CD4-positive, alpha-beta memory T cell (primary cell): ENCODE measurements at regions of chr15 and their contacts with region 1.

Region 1: GRCh38 chr15:51503003-51503402 is 119.6 kb downstream of the DMXL2 start:
- DNase-seq: no peak
- H3K4me3 ChIP-seq: no peak overlapping the region
- H3K4me3 Mint-ChIP-seq: no peak overlapping the region
- H3K27ac ChIP-seq: no peak overlapping the region
- H3K27ac Mint-ChIP-seq: no peak overlapping the region
- H3K4me1 ChIP-seq: no peaks in the 10 kb centered on the region
- H3K4me1 Mint-ChIP-seq: no peaks in the 10 kb centered on the region
- H3K27me3 ChIP-seq: no peaks in the 10 kb centered on the region
- H3K27me3 Mint-ChIP-seq: no peaks in the 10 kb centered on the region

Region 2: DNA sequence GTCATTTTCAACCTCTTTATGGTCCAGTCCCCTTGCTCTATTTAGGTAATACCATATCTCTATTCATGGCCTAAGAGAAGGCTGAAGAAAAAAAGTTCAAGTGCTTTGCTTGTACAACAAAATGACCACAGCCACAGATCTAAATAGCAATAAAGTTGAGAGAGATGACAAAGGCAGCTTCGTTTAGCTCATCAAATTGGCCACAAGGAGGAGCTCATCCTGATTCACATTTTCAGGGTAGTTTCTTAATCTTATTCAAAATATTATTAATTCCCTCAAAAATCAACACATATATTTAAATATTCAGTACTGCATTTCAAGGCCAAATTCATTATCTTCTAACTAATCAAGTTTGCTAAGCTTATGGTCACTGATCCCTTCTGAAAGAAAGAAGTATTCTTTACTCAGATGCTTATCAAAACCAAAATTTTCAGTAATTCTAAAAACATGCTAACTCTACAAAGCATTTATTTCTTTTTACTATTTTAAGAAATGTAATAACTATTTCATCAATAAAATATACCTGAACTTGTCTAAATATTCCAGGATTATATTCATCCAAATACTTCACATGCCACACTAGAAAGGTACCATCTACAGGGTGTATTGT is 34.1 kb after region 1 on chr15:
- CTCF ChIA-PET with region 1: no interaction called
- POLR2A ChIA-PET with region 1: no interaction called
- intact Hi-C with region 1: loop called (anchors 1 kb)
- DNase-seq: no peak
- H3K4me3 ChIP-seq: no peak overlapping the region
- H3K4me3 Mint-ChIP-seq: no peak overlapping the region
- H3K27ac ChIP-seq: no peak overlapping the region
- H3K27ac Mint-ChIP-seq: no peak overlapping the region
- H3K4me1 ChIP-seq: no peaks in the 10 kb centered on the region
- H3K4me1 Mint-ChIP-seq: no peaks in the 10 kb centered on the region
- H3K27me3 ChIP-seq: no peaks in the 10 kb centered on the region
- H3K27me3 Mint-ChIP-seq: no peaks in the 10 kb centered on the region